Endothelial cell of umbilical vein (primary cell): ENCODE measurements at regions of chr20 and their contacts with region 1.

Region 1: GRCh38 chr20:13819885-13820645 is 35.2 kb downstream of the NDUFAF5 start:
- DNase-seq: peak; percentile 60
- H3K4me3 ChIP-seq: no peak overlapping the region
- H3K27ac ChIP-seq: no peak overlapping the region
- H3K4me1 ChIP-seq: peaks cover 8% of the 10 kb centered on the region
- H3K27me3 ChIP-seq: peaks cover 0 to 4% of the 10 kb centered on the region in 2 experiments
- CTCF ChIP-seq: peak; percentile 21 to 33
- POLR2A ChIP-seq: no peak

Region 2: GRCh38 chr20:13809373-13809772 is 10.7 kb before region 1 on chr20:
- CTCF ChIA-PET with region 1: interaction called, 12 read pairs
- POLR2A ChIA-PET with region 1: no interaction called
- dilution Hi-C with region 1: no loop called
- intact Hi-C with region 1: no loop called
- DNase-seq: no peak
- H3K4me3 ChIP-seq: no peak overlapping the region
- H3K27ac ChIP-seq: no peak overlapping the region
- H3K4me1 ChIP-seq: no peaks in the 10 kb centered on the region
- H3K27me3 ChIP-seq: no peaks in the 10 kb centered on the region
- CTCF ChIP-seq: no peak
- POLR2A ChIP-seq: no peak

Region 3: GRCh38 chr20:14055127-14055742 is 235.2 kb after region 1 on chr20:
- CTCF ChIA-PET with region 1: interaction called, 65 read pairs
- POLR2A ChIA-PET with region 1: no interaction called
- dilution Hi-C with region 1: no loop called
- intact Hi-C with region 1: loop called (anchors 1 kb)
- DNase-seq: peak; percentile 68
- H3K4me3 ChIP-seq: no peak overlapping the region
- H3K27ac ChIP-seq: no peak overlapping the region
- H3K4me1 ChIP-seq: no peaks in the 10 kb centered on the region
- H3K27me3 ChIP-seq: no peaks in the 10 kb centered on the region
- CTCF ChIP-seq: peak; percentile 37 to 42
- POLR2A ChIP-seq: no peak

Region 4: GRCh38 chr20:14155361-14155760 is 335.3 kb after region 1 on chr20:
- CTCF ChIA-PET with region 1: no interaction called
- POLR2A ChIA-PET with region 1: no interaction called
- dilution Hi-C with region 1: no loop called
- intact Hi-C with region 1: no loop called
- DNase-seq: no peak
- H3K4me3 ChIP-seq: no peak overlapping the region
- H3K27ac ChIP-seq: no peak overlapping the region
- H3K4me1 ChIP-seq: no peaks in the 10 kb centered on the region
- H3K27me3 ChIP-seq: no peaks in the 10 kb centered on the region
- CTCF ChIP-seq: no peak
- POLR2A ChIP-seq: no peak

Region 5: GRCh38 chr20:14807224-14807623 is 987.2 kb after region 1 on chr20:
- CTCF ChIA-PET with region 1: no interaction called
- POLR2A ChIA-PET with region 1: no interaction called
- dilution Hi-C with region 1: no loop called
- intact Hi-C with region 1: no loop called
- DNase-seq: no peak
- H3K4me3 ChIP-seq: no peak overlapping the region
- H3K27ac ChIP-seq: no peak overlapping the region
- H3K4me1 ChIP-seq: no peaks in the 10 kb centered on the region
- H3K27me3 ChIP-seq: no peaks in the 10 kb centered on the region
- CTCF ChIP-seq: no peak
- POLR2A ChIP-seq: no peak